Dorsolateral prefrontal cortex (tissue), 120 donors: ENCODE measurements at regions of chr15 and their contacts with region 1.

Region 1: GRCh38 chr15:23642413-23643044 is 5.1 kb downstream of the MAGEL2 start:
- DNase-seq: peak; percentile 15 to 81 (median 68)
- H3K4me3 ChIP-seq: peak overlapping the region in 7 of 59 donors; percentile 1 to 40 (median 20)
- H3K27ac ChIP-seq: no peak overlapping the region
- H3K27me3 ChIP-seq: peaks cover 0 to 8% (median 0%) of the 10 kb centered on the region in 45 donors
- CTCF ChIP-seq: peak; percentile 57 to 96 (median 90)

Region 2: GRCh38 chr15:23866832-23867231 is 224.3 kb after region 1 on chr15:
- intact Hi-C with region 1: loop called in 1 of 2 experiments (anchors 2 kb)
- DNase-seq: no peak
- H3K4me3 ChIP-seq: no peak overlapping the region
- H3K27ac ChIP-seq: no peak overlapping the region
- H3K27me3 ChIP-seq: peaks cover 0 to 39% (median 17%) of the 10 kb centered on the region in 45 donors
- CTCF ChIP-seq: peak; percentile 13 to 72 (median 48)

Region 3: DNA sequence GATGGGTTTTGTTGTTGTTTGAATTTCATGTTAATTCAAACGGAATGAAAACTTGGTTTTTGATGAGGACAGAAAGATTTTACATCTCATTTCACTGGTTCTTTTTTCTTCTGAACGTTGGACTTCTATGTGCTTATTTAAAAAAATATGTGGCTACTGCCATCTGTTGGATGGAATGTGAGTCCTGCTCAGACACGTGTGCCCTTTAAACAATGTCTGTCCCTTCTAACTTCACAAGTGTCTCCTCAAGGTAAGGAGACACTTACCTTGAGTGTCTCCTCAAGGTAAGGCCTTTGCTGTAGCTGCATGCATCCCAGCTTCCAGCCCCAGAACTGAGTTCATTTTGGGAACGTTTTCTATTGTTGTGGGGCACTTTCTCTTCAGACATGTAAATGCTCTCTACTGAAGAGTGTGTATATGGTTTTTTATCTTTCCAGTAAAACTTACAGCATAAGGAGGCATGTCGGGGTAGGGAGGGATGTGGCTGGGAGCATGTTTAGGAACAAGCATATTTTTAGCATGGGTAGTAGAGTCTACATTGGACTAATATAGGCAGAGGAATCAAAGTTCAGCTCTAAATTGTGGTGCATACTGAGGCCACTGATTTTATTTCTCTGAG is 1859.4 kb after region 1 on chr15:
- intact Hi-C with region 1: loop called in 1 of 2 experiments (anchors 5 kb)
- DNase-seq: no peak
- H3K4me3 ChIP-seq: no peak overlapping the region
- H3K27ac ChIP-seq: peak overlapping the region in 2 of 59 donors; percentile 2 to 45
- H3K27me3 ChIP-seq: no peaks in the 10 kb centered on the region
- CTCF ChIP-seq: peak; percentile 39 to 77 (median 58)